A549 (cell line): ENCODE measurements at regions of chr3 and their contacts with region 1.

Region 1: GRCh38 chr3:38346587-38347410 is at the start of gene XYLB:
- DNase-seq: peak; percentile 88 to 89
- ATAC-seq: peak; percentile 98
- H3K4me3 ChIP-seq: peak within 1 kb of the TSS; percentile 58
- H3K27ac ChIP-seq: peak within 1 kb of the TSS; percentile 73 to 91
- H3K4me1 ChIP-seq: peaks cover 6% of the 10 kb centered on the region; the same call in 1 of the 3 replicates
- CTCF ChIP-seq: peak; percentile 89
- EP300 ChIP-seq: no peak
- POLR2A ChIP-seq: peak; percentile 86
- RAD21 ChIP-seq: peak; percentile 52 to 72
- polyA plus RNA-seq, gene XYLB: 5.4 and 6.6 TPM in 2 replicates

Region 2: DNA sequence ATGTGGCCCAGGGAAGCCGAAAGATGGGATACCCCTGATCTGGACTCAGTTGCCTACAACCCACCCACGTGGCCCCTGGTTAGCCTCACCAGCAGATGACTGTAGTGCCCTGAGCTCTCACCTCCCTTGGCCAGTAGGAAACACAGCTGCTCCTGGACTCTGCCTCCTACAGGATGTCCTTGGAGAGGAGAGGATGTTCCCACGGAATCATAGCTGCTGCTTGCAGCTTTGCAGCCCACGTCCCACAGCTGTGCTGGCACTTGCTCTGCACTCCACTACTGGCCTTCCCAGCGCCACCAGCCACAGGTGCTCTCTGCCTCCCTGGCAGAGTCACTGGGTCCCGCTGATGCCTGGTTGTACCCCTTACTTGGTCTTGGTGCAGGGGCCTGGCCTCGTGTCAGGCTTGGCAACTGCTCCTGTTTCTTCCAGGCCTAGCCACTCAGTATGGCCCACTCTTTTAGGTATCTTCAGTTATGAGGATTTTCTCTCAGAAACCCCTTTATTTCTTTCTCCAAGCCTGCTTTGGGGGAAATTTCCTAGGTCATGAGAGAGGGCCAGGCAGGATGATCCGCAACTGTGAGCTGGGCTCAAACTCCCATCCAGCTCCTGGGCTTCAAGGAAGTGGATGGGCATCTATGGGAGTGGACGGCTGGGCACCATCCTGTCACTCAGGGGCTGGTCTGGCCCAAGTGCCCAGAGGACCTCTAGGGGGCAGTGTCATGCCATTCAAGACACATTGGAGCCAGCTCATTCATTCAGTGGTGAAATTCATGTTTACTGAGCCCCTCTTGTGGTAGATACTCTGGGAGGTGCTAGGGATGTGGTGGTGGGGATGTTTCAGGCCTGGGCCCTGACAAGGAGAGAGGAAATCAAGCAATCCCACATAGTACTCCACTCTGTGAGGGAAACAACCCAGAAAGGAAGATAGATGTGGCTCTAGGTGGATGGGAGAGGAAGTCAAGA is 372.4 kb before region 1 on chr3:
- CTCF ChIA-PET with region 1: interaction called, 17 read pairs
- POLR2A ChIA-PET with region 1: no interaction called
- DNase-seq: peak; percentile 70 to 80
- ATAC-seq: peak; percentile 96 to 99
- H3K4me3 ChIP-seq: no peak overlapping the region
- H3K27ac ChIP-seq: no peak overlapping the region
- H3K4me1 ChIP-seq: no peaks in the 10 kb centered on the region
- CTCF ChIP-seq: peak; percentile 72
- EP300 ChIP-seq: no peak
- POLR2A ChIP-seq: no peak
- RAD21 ChIP-seq: peak; percentile 71 to 73

Region 3: DNA sequence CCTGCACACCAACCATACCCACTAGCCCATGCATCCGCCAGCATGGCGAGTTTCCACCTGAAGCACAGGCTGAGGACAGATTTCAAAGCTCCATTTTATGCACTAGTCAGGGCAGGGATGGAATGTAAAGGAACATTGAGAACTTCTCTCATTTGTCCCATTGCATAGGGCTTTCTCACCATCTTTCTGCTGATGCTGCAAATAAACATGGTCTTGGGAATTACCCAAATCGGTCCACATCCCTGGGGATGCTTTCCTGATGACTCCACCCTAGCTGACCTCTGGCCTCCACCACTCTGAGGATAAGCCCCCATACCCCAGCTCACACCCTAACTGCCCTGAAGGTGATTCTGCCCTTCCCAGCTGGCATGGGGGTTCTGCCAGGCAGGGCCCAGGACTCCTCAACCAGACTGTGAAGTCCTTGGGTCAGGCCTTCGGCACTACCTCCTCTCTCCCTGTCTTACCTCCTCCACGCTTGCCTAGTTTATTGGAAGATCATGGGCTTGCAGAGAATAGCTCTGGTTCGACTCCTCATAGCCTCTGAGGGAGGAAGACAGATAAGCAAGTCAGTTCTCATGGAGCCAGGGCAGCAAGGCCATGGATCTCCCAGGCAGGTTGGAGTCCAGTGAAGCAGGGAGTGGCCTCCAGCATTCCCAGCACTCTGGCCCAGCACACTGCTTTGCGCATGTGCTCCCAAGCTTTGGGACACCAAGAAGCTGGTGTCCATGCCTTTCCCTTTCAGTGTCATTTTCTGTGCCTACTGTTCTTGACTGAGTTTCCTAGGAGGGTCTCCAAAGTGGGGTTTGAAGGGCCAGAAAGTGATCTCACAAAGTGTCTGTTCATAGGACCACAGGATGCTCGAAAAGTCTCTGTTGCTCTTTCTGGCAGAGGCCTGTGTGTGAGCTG is 27.8 kb before region 1 on chr3:
- CTCF ChIA-PET with region 1: interaction called, 10 read pairs
- POLR2A ChIA-PET with region 1: no interaction called
- DNase-seq: no peak
- ATAC-seq: no peak
- H3K4me3 ChIP-seq: no peak overlapping the region
- H3K27ac ChIP-seq: no peak overlapping the region
- H3K4me1 ChIP-seq: no peaks in the 10 kb centered on the region
- CTCF ChIP-seq: no peak
- EP300 ChIP-seq: no peak
- POLR2A ChIP-seq: no peak
- RAD21 ChIP-seq: no peak

Region 4: GRCh38 chr3:38334142-38335055 is 12.4 kb before region 1 on chr3:
- CTCF ChIA-PET with region 1: interaction called, 24 read pairs
- POLR2A ChIA-PET with region 1: no interaction called
- DNase-seq: no peak
- ATAC-seq: peak; percentile 49 to 61; a peak in 5 of 6 replicates
- H3K4me3 ChIP-seq: no peak overlapping the region
- H3K27ac ChIP-seq: no peak overlapping the region
- H3K4me1 ChIP-seq: peaks cover 5% of the 10 kb centered on the region; the same call in 1 of the 3 replicates
- CTCF ChIP-seq: no peak
- EP300 ChIP-seq: no peak
- POLR2A ChIP-seq: no peak
- RAD21 ChIP-seq: no peak

Region 5: DNA sequence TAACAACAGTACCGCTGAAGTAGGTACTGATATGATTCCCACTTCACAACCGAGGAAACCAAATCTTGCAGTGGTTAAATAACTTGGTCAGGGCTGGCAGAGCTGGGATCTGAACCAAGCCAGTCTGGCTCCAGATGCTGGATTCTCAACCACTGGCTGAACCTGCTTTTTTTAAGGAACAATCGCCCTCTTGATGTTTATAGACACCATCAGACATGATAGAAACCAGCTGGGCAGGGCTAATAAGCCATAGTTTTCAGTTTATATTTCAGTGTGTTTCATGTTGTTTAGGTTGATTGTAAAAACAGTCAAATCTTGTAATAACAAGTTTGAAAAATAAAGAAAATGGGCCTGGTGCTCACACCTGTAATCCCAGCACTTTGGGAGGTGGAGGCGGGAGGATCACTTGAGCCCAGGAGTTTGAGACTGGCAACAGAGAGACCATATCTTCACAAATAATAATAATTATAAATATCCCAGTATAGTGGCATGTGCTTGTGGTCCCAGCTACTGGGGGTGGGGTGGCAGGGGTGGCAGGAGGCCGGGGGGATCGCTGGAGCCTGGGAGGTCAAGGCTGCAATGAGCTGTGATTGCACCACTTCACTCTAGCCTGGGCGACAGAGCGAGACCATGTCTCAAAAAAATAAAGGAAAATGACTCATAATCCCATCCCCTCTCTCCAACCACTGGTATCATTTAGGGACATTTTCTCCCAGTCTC is 36.5 kb after region 1 on chr3:
- CTCF ChIA-PET with region 1: interaction called, 13 read pairs
- POLR2A ChIA-PET with region 1: no interaction called
- DNase-seq: no peak
- ATAC-seq: no peak
- H3K4me3 ChIP-seq: no peak overlapping the region
- H3K27ac ChIP-seq: no peak overlapping the region
- H3K4me1 ChIP-seq: no peaks in the 10 kb centered on the region
- CTCF ChIP-seq: no peak
- EP300 ChIP-seq: no peak
- POLR2A ChIP-seq: no peak
- RAD21 ChIP-seq: no peak

Region 6: DNA sequence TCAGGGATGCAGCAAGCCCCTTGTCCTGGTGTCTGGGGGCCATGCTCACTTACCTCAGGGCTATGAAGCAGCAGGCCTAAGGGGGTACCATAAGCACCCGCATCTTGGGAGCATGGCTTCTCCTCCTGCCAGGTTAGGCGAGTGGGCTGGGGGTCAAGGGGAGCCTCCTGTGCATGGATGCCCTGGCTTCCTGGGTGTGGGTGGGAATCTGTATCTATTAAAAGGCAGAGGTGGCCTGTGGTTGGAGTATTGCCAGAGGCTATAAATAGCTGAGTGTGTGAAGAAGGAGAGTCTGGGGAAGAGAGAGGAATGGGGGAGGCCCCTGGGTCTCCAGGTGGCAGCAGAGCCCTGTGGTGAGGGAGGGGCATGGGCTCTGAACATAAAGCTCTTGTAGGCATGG is 126.4 kb after region 1 on chr3:
- CTCF ChIA-PET with region 1: interaction called, 14 read pairs
- POLR2A ChIA-PET with region 1: no interaction called
- DNase-seq: no peak
- ATAC-seq: no peak
- H3K4me3 ChIP-seq: no peak overlapping the region
- H3K27ac ChIP-seq: no peak overlapping the region
- H3K4me1 ChIP-seq: no peaks in the 10 kb centered on the region
- CTCF ChIP-seq: no peak
- EP300 ChIP-seq: no peak
- POLR2A ChIP-seq: no peak
- RAD21 ChIP-seq: no peak